SK-N-SH (cell line): ENCODE measurements at regions of chr11 and their contacts with region 1.

Region 1: GRCh38 chr11:34174412-34175041 is 69.1 kb downstream of the NAT10 start:
- DNase-seq: peak; percentile 95
- H3K4me3 ChIP-seq: peak overlapping the region; percentile 27 to 47; a peak in 2 of 4 replicates
- H3K27ac ChIP-seq: no peak overlapping the region
- H3K4me1 ChIP-seq: peaks cover 5 to 10% of the 10 kb centered on the region in 2 experiments; a peak in 2 of 4 replicates
- H3K27me3 ChIP-seq: no peaks in the 10 kb centered on the region
- CTCF ChIP-seq: peak; percentile 90
- EP300 ChIP-seq: no peak; a peak in 2 of 4 replicates
- RAD21 ChIP-seq: peak; percentile 93

Region 2: GRCh38 chr11:33996498-33997454 is 177.8 kb before region 1 on chr11:
- CTCF ChIA-PET with region 1: interaction called, 23 read pairs
- POLR2A ChIA-PET with region 1: no interaction called
- DNase-seq: peak; percentile 80
- H3K4me3 ChIP-seq: no peak overlapping the region
- H3K27ac ChIP-seq: no peak overlapping the region
- H3K4me1 ChIP-seq: peaks cover 6 to 30% of the 10 kb centered on the region in 2 experiments; a peak in 2 of 4 replicates
- H3K27me3 ChIP-seq: peaks cover 14% of the 10 kb centered on the region; the same call in 1 of the 2 replicates
- CTCF ChIP-seq: peak; percentile 79
- EP300 ChIP-seq: no peak
- RAD21 ChIP-seq: peak; percentile 84

Region 3: GRCh38 chr11:34051349-34052035 is 123.0 kb before region 1 on chr11 and contains the start of gene CAPRIN1:
- CTCF ChIA-PET with region 1: no interaction called
- POLR2A ChIA-PET with region 1: no interaction called
- DNase-seq: peak; percentile 95
- H3K4me3 ChIP-seq: peak within 1 kb of the TSS; percentile 95
- H3K27ac ChIP-seq: peak within 1 kb of the TSS; percentile 97
- H3K4me1 ChIP-seq: peaks cover 13 to 70% of the 10 kb centered on the region in 2 experiments
- H3K27me3 ChIP-seq: no peaks in the 10 kb centered on the region
- CTCF ChIP-seq: no peak
- EP300 ChIP-seq: peak in 1 of 2 experiments; percentile 3; a peak in 1 of 4 replicates
- RAD21 ChIP-seq: no peak
- polyA plus RNA-seq, gene CAPRIN1: 67.1 and 93.4 TPM in 2 replicates

Region 4: DNA sequence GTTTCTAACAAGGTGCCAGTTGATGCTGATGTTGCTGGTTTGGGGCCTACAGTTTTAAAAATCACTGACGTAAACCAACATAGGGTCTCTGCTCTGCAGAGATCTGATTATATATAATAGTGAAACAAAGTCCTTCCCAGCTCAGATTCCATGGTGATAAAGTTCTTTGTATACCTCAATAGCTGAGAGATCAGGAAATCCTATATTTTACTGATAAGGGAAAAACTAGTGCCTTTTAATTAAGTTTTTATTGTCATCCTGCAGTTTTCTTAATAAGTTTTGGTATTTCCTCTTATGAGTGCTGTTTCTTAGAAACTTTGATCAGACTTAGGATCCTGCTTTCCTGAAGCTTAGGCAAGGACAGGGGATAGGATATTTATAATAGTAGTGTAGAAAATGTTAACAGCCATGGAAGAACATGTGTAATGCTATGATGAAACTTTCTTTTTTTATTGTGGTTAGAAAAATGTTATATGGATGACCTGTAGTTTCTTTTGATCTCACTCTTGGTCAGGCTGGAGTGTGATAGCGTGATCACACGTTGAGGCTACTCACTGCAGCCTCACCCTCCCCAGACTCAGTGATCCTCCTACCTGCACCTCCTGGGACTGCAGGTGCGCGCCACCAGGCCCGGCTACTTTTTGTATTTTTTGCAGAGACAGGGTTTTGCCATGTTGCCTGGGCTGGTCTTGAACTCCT is 108.9 kb before region 1 on chr11:
- CTCF ChIA-PET with region 1: no interaction called
- POLR2A ChIA-PET with region 1: no interaction called
- DNase-seq: no peak
- H3K4me3 ChIP-seq: no peak overlapping the region
- H3K27ac ChIP-seq: peak overlapping the region in 1 of 2 experiments; percentile 2; a peak in 1 of 4 replicates
- H3K4me1 ChIP-seq: peaks cover 0 to 72% of the 10 kb centered on the region in 2 experiments
- H3K27me3 ChIP-seq: no peaks in the 10 kb centered on the region
- CTCF ChIP-seq: no peak
- EP300 ChIP-seq: no peak
- RAD21 ChIP-seq: no peak

Region 5: DNA sequence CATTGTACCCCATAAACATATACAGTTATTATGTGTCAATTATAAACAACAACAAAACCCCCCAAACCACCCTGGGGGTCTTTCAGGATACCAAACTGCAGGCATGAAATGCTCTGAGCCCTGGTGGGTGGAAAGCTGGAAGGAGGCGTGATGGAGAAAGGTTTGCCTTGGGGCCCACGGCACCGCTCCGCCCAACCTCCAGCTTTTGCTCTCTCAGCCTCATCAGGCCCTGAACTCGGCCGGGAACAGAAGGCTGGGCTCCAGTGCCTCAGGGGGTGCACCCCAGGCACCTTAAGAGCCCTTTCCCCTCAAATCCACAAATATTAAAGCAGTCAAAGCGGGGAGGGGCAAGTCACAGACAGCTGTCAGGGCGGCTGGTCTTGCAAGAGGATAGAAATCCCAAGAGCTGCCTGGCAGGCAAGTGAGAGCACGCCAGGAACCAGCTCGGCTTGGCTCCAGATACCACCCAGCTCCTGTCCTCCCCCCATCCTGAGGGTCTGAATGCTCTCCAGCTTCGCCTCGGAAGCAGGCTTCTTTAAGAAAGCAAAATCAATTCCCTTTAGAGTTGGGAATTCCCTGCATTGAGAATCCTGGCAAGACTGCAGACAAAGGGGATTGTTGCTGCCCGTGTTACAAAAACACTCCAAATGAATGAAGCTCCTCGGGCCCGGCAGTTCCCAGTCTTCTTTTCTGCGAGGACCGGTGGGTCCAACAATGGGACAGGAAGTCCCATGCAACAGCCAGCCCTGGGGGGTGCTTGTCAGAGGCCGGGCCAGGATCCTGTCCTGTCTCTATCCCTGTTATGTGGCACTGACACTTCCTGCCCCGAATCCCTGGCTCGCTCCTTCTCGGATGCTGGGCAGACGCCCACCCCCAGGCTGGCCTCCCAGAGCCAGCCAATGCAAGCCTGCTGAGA is 11.7 kb after region 1 on chr11:
- CTCF ChIA-PET with region 1: interaction called, 45 read pairs
- POLR2A ChIA-PET with region 1: interaction called, 4 read pairs
- DNase-seq: no peak
- H3K4me3 ChIP-seq: no peak overlapping the region
- H3K27ac ChIP-seq: no peak overlapping the region
- H3K4me1 ChIP-seq: peaks cover 9 to 23% of the 10 kb centered on the region in 2 experiments; a peak in 2 of 4 replicates
- H3K27me3 ChIP-seq: no peaks in the 10 kb centered on the region
- CTCF ChIP-seq: no peak
- EP300 ChIP-seq: no peak
- RAD21 ChIP-seq: no peak

Region 6: DNA sequence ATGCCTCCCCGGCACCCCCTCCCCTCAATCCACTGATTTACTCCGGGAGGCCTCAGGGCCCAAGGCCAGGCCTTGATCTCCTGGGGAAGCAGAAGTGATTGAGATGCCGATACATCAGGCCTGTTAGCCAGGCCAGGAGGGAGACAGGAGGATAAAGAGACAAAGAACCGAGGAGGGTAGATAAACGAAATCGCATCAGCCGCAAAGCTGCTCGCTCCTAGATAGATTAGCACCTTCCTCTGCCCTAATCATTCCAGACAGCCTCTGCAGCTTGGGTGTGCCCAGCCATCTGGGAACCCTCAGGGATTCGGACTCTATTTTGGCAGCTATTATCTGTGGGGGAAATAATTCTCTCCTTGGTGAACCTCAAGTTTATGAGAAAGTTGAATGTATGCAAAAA is 62.0 kb after region 1 on chr11:
- CTCF ChIA-PET with region 1: interaction called, 11 read pairs
- POLR2A ChIA-PET with region 1: no interaction called
- DNase-seq: peak; percentile 47
- H3K4me3 ChIP-seq: no peak overlapping the region
- H3K27ac ChIP-seq: no peak overlapping the region
- H3K4me1 ChIP-seq: peaks cover 9 to 13% of the 10 kb centered on the region in 2 experiments; a peak in 2 of 4 replicates
- H3K27me3 ChIP-seq: no peaks in the 10 kb centered on the region
- CTCF ChIP-seq: no peak
- EP300 ChIP-seq: peak in 1 of 2 experiments; percentile 41; a peak in 1 of 4 replicates
- RAD21 ChIP-seq: no peak; the same call in 1 of the 2 replicates

Region 7: DNA sequence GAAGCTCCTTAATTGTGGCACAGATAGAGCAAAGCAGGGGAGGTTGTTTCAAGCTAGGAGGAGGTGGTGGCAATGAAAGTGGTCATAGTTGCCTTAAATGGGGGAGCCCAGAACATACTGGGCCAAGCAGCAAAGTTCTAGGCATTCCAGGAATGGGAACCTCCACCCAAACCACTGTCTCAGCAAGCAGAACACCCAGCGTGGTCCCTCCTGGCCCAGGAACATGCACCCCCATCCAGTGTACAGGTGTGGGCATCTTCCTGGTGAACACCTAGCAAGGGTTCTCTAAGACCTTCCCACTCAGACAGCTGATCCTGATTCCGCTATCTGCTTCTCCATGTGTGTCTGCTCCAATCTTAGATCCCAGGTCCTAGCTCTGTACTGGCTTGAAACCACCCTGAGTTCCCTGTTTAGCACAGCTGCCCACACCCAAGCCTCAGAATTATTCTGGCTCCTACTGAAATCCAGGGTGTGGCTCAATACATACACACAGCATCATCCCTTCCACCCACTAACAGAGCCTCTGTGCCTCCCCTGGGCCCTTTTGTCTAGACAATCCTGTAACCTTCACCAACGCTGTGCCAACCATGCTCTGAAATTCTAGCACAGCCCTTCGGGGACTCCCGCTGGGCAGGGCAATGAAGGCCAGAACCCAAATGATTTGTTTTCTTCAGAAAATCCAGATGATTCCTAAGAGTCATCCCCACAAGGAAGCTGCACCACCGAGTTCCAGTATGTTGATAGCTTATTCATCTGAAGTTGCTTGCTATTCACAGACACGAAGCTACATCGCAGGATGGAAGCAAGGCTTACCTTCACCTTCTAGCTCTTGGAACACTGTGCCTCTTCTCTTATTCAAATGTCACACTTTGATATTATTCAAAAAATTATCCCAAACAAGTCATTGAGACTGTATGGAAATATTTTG is 106.7 kb after region 1 on chr11:
- CTCF ChIA-PET with region 1: interaction called, 38 read pairs
- POLR2A ChIA-PET with region 1: no interaction called
- DNase-seq: no peak
- H3K4me3 ChIP-seq: no peak overlapping the region
- H3K27ac ChIP-seq: 0 out of 4 replicates have a peak overlapping the region, but pooled peaks of 1 of the 2 experiments have one; percentile 23
- H3K4me1 ChIP-seq: peaks cover under 1 to 54% of the 10 kb centered on the region in 2 experiments; a peak in 3 of 4 replicates
- H3K27me3 ChIP-seq: no peaks in the 10 kb centered on the region
- CTCF ChIP-seq: no peak
- EP300 ChIP-seq: no peak
- RAD21 ChIP-seq: 0 out of 2 replicates have a peak, but pooled peaks have one; percentile 6

Region 8: GRCh38 chr11:34344768-34345539 is 170.4 kb after region 1 on chr11:
- CTCF ChIA-PET with region 1: interaction called, 240 read pairs
- POLR2A ChIA-PET with region 1: no interaction called
- DNase-seq: no peak
- H3K4me3 ChIP-seq: no peak overlapping the region
- H3K27ac ChIP-seq: peak overlapping the region; percentile 26 to 56
- H3K4me1 ChIP-seq: peaks cover 51 to 55% of the 10 kb centered on the region in 2 experiments
- H3K27me3 ChIP-seq: no peaks in the 10 kb centered on the region
- CTCF ChIP-seq: no peak
- EP300 ChIP-seq: peak in 1 of 2 experiments; percentile 58; a peak in 2 of 4 replicates
- RAD21 ChIP-seq: no peak

Region 9: DNA sequence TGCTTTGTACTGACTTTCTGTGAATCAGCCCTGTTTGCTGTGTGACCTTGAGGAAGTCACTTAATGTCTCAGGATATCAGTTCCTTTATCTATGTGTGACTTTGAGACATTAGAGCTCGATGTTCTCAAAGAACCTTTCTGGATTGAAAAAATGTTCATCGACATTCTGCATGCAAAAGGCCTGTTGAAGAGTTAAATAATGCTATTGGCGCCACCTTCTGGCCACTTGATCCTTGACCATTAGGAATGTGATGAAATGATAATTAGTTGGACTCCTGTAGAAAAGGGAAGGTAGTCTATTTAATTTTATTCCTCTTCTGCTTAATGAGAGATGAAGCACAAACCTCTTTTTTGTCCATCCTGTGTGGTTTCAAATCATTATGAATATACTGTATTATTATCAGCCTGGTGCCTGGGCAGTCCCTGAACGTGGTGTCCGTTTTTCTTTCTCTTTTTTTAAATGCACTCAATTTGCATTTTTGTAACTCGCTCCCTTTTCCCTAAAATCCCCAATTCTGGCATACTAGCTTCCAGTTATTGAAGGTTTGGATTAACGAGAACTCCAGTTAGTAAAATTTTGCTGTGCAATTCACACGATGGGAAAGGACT is 318.4 kb after region 1 on chr11:
- CTCF ChIA-PET with region 1: interaction called, 23 read pairs
- POLR2A ChIA-PET with region 1: no interaction called
- DNase-seq: peak; percentile 72
- H3K4me3 ChIP-seq: no peak overlapping the region
- H3K27ac ChIP-seq: no peak overlapping the region
- H3K4me1 ChIP-seq: no peaks in the 10 kb centered on the region; a peak in 1 of 4 replicates
- H3K27me3 ChIP-seq: no peaks in the 10 kb centered on the region; the same call in 1 of the 2 replicates
- CTCF ChIP-seq: peak; percentile 89
- EP300 ChIP-seq: no peak
- RAD21 ChIP-seq: peak; percentile 85